ENCODE measurements at regions of chr16 and their contacts with region 1.

Region 1: DNA sequence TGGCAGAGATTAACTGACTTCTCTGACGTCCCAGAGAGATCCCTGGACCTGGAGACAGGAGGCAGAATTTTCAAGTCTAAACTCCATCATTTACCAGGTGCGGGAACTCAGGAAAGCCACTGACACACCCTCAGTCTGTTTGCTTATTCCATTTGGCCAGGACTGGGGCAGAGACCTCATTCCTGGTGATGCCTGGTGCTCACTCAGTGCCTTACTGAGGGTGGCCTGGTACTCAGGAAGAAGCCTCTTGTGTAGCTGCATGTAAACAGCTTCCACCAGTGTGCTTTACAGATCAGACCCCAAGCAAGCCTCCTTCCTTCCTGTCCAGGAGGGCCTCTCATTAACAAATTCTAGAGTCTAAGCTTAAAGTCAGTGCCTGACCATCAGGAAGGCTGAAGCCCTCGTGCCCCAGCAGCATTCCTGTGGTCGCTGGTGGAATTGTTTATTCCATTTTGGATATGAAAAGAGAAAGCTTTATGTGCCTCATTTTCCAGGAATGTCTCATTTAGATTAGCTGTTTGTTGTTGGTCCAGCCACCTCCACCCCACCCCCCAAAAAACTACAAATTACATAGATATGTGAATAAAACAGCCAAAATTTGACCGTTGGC is 236.1 kb upstream of the CDH5 start:
- DNase-seq: peak; percentile 87
- H3K4me3 ChIP-seq: no peak overlapping the region
- H3K27ac ChIP-seq: peak overlapping the region; percentile 94
- H3K27me3 ChIP-seq: no peaks in the 10 kb centered on the region
- CTCF ChIP-seq: no peak

Region 2: DNA sequence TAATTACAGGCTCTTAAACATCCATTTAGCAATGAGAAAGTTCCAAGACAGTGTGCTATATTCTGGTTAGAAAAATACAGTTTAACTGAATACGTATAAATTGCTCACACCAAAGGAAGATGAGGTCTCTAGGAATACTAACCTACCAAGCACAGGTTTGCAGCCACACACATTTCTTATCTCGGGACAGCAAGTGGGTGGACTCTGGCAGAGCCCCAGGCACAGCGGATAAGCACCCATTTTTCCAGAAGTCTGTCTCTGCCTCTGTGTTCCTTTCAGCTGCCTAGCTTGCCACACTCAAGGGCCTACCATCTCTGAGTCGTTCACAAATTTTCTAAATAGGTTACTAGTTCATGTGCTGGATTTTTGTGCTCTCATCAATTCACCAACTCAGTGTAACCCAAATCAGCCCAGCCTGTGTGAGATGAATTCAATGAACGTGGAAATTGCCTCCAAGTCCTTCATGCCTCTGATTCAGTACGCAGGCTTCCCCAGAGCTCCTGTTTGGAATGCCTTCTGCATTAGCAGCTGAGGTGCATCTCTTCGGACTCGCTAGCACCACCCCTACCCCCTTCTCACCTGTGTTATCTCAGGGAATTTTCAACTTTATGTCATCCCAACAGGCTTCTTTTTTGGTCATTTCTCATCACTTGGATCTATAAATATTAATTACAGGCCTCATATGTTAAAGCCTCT is 427.5 kb before region 1 on chr16:
- CTCF ChIA-PET with region 1: no interaction called
- POLR2A ChIA-PET with region 1: interaction called, 14 read pairs
- DNase-seq: no peak
- H3K4me3 ChIP-seq: no peak overlapping the region
- H3K27ac ChIP-seq: no peak overlapping the region
- H3K27me3 ChIP-seq: peaks cover 4% of the 10 kb centered on the region
- CTCF ChIP-seq: no peak

Region 3: DNA sequence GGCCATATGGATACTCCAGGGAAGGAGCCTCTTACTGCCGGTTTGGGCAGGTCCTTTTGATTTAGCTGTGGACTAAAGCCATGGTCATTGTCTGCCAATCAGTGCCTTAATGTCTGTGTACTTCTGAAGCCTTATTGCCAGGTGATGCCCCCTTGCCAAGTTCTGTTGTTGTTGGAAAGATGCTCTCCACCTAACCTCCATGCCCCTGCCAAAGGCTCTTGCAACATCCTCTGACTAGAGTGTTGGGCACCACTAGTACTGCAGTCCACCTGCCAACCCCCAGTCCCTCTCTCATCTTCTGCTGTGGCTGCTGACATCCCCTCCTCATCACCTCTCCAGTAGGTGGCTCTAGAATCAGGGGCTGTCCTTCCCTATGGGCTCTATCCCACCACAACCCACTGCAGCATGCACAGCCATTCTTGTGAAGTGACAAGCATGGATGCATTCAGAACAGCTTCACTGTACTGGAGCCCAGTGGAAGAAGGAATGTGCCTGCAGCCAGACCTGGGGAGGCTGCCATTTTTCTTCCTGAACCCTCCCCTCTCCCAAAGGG is 139.2 kb before region 1 on chr16:
- CTCF ChIA-PET with region 1: no interaction called
- POLR2A ChIA-PET with region 1: no interaction called
- DNase-seq: no peak
- H3K4me3 ChIP-seq: no peak overlapping the region
- H3K27ac ChIP-seq: no peak overlapping the region
- H3K27me3 ChIP-seq: peaks cover 36% of the 10 kb centered on the region
- CTCF ChIP-seq: no peak

Region 4: GRCh38 chr16:66188917-66189725 is 58.7 kb after region 1 on chr16:
- CTCF ChIA-PET with region 1: interaction called, 3 read pairs
- POLR2A ChIA-PET with region 1: interaction called, 10 read pairs
- DNase-seq: peak; percentile 63
- H3K4me3 ChIP-seq: no peak overlapping the region
- H3K27ac ChIP-seq: peak overlapping the region; percentile 87
- H3K27me3 ChIP-seq: no peaks in the 10 kb centered on the region
- CTCF ChIP-seq: no peak

Measured in AG04450 (cell line).